Sciatic nerve (tissue), 2 donors: ENCODE measurements at regions of chr6 and their contacts with region 1.

Region 1: GRCh38 chr6:147022041-147022440 is 182.2 kb upstream of the STXBP5 start:
- DNase-seq: no peak
- ATAC-seq: no peak

Region 2: DNA sequence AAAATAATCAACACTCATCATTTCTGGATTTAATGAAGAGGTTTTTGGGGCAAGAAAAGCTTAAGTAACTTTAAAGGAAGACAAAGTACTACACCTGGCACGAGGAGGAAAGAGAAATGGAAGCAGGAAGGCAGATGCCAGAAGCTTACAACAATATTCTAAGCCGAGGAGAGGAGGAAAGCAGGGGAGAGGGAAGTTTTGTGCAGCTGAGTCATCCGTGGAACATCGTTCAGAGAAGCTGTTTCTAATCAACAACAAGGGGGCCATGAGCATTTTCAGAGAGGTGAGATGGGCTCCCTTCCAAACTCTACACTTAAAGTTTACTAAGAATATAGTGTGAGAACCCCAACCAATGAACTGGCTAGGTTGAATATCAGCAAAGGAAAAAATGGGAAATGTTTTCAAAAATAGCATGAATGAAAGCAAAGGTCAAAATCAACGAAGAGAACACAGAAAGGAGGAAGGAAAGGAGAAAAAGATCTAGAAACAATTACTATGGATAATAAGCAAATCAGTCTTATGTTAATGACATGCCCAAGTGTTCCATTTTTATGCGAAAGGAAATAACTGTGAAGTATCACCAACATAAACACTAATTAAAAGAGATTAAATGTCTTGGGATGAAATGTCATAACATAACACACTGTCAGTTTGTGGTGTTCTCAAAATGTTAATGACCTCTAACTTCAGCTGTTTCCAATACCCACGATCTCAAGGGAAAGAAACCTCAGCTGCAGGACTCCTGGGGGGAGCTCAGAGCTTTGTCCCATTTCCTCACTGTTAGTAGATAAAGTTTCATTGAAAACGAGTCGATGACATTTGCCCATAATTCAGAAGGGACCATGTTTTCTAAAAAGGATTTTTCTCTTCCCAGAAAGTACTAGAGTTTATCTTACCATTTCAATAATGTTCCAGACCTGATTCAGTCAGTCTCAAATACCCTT is 21.2 kb before region 1 on chr6:
- intact Hi-C with region 1: loop called (anchors 1 kb)
- DNase-seq: no peak
- ATAC-seq: peak; percentile 39

Region 3: DNA sequence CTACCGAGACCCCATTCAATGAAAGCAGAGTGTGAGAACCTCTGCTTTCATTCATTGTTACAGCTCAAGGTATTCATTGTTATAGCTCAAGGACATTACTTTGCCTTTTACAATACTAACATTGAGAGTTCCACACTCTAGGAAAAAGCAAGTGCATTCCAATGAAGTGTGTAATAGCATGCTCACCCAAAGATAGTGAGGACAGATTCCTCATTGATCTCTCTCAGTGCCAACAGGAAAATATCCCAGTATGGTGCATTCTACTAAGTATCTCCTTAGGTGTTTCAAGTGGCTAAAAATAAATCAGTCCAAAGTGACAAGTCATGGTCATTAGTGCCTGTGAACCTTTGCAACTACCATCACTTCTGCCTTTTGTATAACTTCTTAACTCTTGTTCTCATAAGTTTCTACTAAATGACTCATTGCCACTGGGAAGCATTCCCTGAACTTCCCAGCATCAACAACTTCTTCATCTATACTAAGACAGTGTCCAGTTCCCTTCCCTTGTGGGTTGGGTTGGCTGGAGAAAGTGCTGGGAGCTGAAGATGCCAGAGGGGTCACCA is 41.5 kb after region 1 on chr6:
- intact Hi-C with region 1: no loop called
- DNase-seq: no peak
- ATAC-seq: no peak

Region 4: GRCh38 chr6:148620579-148621298 is 1598.7 kb after region 1 on chr6:
- intact Hi-C with region 1: no loop called
- DNase-seq: no peak
- ATAC-seq: no peak